ENCODE measurements at regions of chr17 and their contacts with region 1.

Region 1: DNA sequence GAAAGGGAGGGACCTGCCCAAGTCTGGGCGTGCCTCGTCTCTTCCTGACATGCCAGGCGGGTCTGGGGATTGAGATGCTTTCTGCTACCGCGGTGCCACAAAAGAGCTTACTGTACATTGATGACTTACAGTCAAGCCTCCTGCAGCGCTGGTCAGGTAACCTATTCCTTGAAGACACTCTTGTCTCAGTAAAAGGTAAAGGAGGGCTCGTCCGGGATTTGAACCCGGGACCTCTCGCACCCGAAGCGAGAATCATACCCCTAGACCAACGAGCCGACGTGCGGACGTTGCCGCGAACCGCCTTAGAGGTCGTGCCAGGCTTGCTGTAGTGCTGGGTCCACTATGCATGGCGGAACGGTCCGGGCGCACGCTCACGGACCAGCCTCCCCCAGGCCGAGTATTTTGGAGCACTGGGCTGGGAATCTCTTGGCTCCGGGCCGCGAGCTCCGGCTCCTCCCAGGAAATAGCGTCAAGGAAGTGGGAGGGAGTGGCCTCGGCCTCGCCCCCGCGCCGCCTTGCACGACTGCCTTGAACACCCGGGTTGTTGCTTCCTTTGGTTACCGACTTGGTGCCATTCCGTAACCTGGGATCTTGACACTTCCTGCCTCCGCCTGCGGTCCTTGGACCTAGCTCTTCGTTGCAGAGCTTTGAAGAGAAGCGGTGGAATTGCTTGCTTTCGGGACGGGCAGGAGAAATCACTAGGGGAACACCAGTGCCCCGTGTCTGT is 12.4 kb upstream of the AURKB start:
- DNase-seq: peak; percentile 80
- ATAC-seq: peak; percentile 51
- H3K4me3 Mint-ChIP-seq: peak overlapping the region; percentile 97
- H3K27ac Mint-ChIP-seq: peak overlapping the region; percentile 97
- H3K4me1 Mint-ChIP-seq: peaks cover 68% of the 10 kb centered on the region
- H3K27me3 Mint-ChIP-seq: peaks cover 11% of the 10 kb centered on the region
- CTCF ChIP-seq: no peak

Region 2: DNA sequence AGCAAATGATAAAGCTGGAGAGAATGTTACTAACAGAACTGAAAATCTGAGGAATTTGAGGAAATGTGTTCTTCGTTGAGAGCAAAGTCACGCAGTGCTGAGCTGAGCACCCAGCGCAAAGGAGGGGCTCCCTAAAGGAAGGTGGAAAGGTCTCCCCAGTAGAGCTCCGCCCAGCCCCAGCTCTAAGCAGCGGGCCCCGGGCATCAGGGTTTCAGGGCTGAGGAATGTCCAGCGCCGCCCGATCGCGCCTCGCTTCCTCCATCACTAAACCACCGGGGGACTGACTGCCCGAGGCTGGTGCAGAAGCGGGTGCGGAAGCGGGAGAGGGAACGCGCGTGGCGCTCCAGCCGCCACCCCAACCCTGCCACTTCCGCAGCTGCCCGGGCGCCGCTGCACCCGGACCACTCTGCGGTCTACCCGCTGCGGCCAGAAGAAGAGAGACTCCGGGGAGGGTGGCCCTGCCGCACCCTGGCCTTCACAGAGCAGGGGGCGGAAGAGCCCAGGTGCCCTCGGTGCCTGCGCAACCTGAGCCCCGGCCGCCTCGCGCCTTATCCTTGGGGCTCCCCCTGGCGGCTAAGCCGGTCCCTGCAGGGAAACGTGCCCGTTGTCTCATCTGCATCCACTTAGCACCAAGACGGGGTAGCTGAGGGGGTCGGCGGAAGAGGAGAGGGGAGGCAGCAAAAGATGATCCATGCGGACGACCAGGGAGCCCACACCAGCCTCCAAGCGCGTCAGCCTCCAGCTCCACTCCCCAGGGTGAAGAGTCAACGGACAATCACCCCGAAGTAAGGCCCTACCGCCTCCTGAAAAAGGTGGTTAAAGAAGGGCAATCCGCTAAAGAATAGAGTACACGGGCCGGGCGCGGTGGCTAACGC is 232.8 kb before region 1 on chr17:
- CTCF ChIA-PET with region 1: no interaction called
- POLR2A ChIA-PET with region 1: interaction called, 13 read pairs
- intact Hi-C with region 1: no loop called
- DNase-seq: peak; percentile 96
- ATAC-seq: peak; percentile 94
- H3K4me3 Mint-ChIP-seq: peak overlapping the region; percentile 77
- H3K27ac Mint-ChIP-seq: peak overlapping the region; percentile 75
- H3K4me1 Mint-ChIP-seq: peaks cover 17% of the 10 kb centered on the region
- H3K27me3 Mint-ChIP-seq: peaks cover 9% of the 10 kb centered on the region
- CTCF ChIP-seq: no peak

Region 3: DNA sequence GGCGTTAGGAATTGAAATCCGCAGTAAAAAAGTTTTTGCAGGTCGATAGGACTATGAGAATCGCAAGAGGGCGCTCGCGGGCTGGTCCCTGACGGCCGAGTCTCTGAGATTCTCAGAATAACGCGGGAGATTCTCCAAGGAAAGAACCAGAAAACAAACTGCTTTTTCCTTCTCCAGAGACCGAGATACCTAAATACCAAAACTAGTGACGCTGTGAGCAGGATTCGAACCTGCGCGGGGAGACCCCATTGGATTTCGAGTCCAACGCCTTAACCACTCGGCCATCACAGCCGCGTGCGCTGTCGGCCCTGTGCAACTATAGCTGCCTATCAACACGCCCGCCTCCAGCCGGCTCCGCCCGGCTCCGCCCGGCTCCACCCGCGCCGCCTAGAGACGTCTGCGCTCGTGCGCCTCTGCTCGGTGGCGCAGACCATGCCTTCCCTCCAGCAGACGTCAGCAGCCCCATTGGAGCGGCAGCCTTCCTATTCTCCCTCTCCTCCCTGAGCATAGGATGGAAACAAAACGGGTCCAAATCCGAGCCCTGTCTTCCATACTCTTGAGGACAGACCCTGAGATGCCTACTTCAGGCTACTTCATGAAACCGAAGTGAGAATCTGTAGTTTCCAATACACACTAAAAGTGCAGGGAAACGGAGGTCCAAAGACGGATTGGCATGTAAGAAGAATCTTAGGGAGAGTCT is 84.0 kb before region 1 on chr17:
- CTCF ChIA-PET with region 1: interaction called, 4 read pairs
- POLR2A ChIA-PET with region 1: interaction called, 15 read pairs
- intact Hi-C with region 1: loop called (anchors 1 kb)
- DNase-seq: peak; percentile 94
- ATAC-seq: peak; percentile 94
- H3K4me3 Mint-ChIP-seq: no peak overlapping the region
- H3K27ac Mint-ChIP-seq: no peak overlapping the region
- H3K4me1 Mint-ChIP-seq: no peaks in the 10 kb centered on the region
- H3K27me3 Mint-ChIP-seq: no peaks in the 10 kb centered on the region
- CTCF ChIP-seq: peak; percentile 93

Region 4: DNA sequence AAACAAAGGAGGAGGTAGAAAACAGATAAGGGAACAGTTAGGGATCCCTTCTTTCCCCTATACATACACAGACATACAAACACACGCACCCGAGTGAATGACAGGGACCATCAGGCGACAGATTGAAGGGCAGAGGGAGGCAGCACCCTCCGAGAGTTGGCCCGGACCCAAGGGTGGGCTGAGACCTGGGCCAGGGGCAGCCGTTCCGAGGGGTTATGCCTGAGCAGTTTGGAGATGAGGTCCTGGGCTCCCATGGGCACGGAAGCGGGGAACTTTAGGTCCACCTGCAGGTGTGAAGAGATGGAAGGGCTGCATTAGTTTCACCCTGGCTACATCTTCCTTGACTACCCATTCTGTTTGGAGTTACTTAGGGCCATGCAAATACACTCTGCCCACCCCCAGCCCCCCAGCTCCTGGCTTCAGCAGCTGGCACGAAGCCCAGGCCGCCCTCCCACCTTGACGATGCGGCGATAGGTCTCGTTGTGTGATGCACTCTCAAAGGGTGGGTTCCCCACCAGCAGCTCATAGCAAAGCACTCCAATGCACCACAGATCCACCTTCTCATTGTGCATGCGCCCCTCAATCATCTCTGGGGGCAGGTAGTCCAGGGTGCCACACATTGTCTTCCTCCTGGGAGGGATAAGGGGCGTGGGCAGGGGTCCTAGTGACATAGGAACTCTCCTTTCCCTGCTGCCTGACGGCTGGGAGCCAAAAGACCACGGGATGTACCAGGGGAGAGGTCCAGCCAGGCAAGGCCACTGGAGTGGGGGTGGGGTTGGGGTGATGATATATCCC is 17.8 kb before region 1 on chr17:
- CTCF ChIA-PET with region 1: no interaction called
- POLR2A ChIA-PET with region 1: interaction called, 84 read pairs
- intact Hi-C with region 1: loop called (anchors 1 kb)
- DNase-seq: no peak
- ATAC-seq: no peak
- H3K4me3 Mint-ChIP-seq: no peak overlapping the region
- H3K27ac Mint-ChIP-seq: no peak overlapping the region
- H3K4me1 Mint-ChIP-seq: peaks cover 8% of the 10 kb centered on the region
- H3K27me3 Mint-ChIP-seq: no peaks in the 10 kb centered on the region
- CTCF ChIP-seq: no peak

Region 5: GRCh38 chr17:8243827-8244226 is 21.0 kb after region 1 on chr17:
- CTCF ChIA-PET with region 1: interaction called, 9 read pairs
- POLR2A ChIA-PET with region 1: interaction called, 413 read pairs
- intact Hi-C with region 1: loop called (anchors 1 kb)
- DNase-seq: no peak
- ATAC-seq: no peak
- H3K4me3 Mint-ChIP-seq: no peak overlapping the region
- H3K27ac Mint-ChIP-seq: peak overlapping the region; percentile 53
- H3K4me1 Mint-ChIP-seq: peaks cover 35% of the 10 kb centered on the region
- H3K27me3 Mint-ChIP-seq: no peaks in the 10 kb centered on the region
- CTCF ChIP-seq: no peak

Region 6: DNA sequence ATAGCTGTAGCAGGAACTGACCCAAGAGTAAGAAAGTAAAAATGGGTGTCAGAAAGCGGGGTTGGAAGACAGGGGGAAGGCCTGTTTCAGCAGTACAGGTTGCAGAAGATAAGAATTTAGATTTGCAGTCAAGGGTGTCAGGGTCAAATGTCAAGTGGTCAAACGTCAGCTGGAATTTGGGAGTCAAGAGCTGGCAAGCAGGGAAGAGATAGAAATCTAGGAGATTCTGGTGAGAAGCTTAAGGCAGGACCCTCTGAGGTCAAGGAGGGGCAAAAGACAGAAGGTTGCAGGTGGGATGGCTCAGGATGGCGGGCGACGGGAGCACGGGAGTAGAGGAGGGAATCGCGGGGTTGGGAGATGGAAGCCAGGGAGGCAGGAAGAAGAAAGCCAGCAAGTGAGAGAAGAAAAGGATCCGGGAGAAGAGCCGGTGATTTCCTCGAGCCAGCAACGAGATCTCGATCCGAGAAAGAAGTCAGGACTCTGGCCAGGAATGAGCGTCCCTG is 72.1 kb after region 1 on chr17:
- CTCF ChIA-PET with region 1: interaction called, 7 read pairs
- POLR2A ChIA-PET with region 1: interaction called, 68 read pairs
- intact Hi-C with region 1: loop called (anchors 1 kb)
- DNase-seq: no peak
- ATAC-seq: no peak
- H3K4me3 Mint-ChIP-seq: peak overlapping the region; percentile 92
- H3K27ac Mint-ChIP-seq: peak overlapping the region; percentile 86
- H3K4me1 Mint-ChIP-seq: peaks cover 30% of the 10 kb centered on the region
- H3K27me3 Mint-ChIP-seq: no peaks in the 10 kb centered on the region
- CTCF ChIP-seq: no peak

Region 7: GRCh38 chr17:8745586-8746500 is 523.0 kb after region 1 on chr17:
- CTCF ChIA-PET with region 1: no interaction called
- POLR2A ChIA-PET with region 1: no interaction called
- intact Hi-C with region 1: loop called (anchors 2 kb)
- DNase-seq: peak; percentile 84
- ATAC-seq: peak; percentile 81
- H3K4me3 Mint-ChIP-seq: peak overlapping the region; percentile 85
- H3K27ac Mint-ChIP-seq: peak overlapping the region; percentile 77
- H3K4me1 Mint-ChIP-seq: peaks cover 10% of the 10 kb centered on the region
- H3K27me3 Mint-ChIP-seq: no peaks in the 10 kb centered on the region
- CTCF ChIP-seq: peak; percentile 96

Region 8: GRCh38 chr17:9256751-9257629 is 1034.2 kb after region 1 on chr17:
- CTCF ChIA-PET with region 1: no interaction called
- POLR2A ChIA-PET with region 1: no interaction called
- intact Hi-C with region 1: no loop called
- DNase-seq: no peak
- ATAC-seq: peak; percentile 72
- H3K4me3 Mint-ChIP-seq: peak overlapping the region; percentile 12
- H3K27ac Mint-ChIP-seq: no peak overlapping the region
- H3K4me1 Mint-ChIP-seq: peaks cover 16% of the 10 kb centered on the region
- H3K27me3 Mint-ChIP-seq: no peaks in the 10 kb centered on the region
- CTCF ChIP-seq: no peak

Measured in activated B cell treated with CpG ODN at 0.5 μM for 24 hours (primary cell).